Sigmoid colon (tissue), 7 donors: ENCODE measurements at regions of chr19 and their contacts with region 1.

Region 1: GRCh38 chr19:2475702-2476450 is at the start of gene GADD45B:
- DNase-seq: peak; percentile 99
- H3K4me3 ChIP-seq: peak within 1 kb of the TSS; percentile 71 to 97 (median 94)
- H3K27ac ChIP-seq: peak within 1 kb of the TSS; percentile 91 to 96 (median 94)
- H3K4me1 ChIP-seq: peaks cover 0 to 35% (median 20%) of the 10 kb centered on the region in 4 donors
- H3K27me3 ChIP-seq: no peaks in the 10 kb centered on the region
- CTCF ChIP-seq: no peak
- EP300 ChIP-seq: peak in 2 of 4 donors; percentile 42 to 73
- POLR2A ChIP-seq: peak; percentile 100
- total RNA-seq, gene GADD45B: 82.0 to 708 (median 108) TPM

Region 2: DNA sequence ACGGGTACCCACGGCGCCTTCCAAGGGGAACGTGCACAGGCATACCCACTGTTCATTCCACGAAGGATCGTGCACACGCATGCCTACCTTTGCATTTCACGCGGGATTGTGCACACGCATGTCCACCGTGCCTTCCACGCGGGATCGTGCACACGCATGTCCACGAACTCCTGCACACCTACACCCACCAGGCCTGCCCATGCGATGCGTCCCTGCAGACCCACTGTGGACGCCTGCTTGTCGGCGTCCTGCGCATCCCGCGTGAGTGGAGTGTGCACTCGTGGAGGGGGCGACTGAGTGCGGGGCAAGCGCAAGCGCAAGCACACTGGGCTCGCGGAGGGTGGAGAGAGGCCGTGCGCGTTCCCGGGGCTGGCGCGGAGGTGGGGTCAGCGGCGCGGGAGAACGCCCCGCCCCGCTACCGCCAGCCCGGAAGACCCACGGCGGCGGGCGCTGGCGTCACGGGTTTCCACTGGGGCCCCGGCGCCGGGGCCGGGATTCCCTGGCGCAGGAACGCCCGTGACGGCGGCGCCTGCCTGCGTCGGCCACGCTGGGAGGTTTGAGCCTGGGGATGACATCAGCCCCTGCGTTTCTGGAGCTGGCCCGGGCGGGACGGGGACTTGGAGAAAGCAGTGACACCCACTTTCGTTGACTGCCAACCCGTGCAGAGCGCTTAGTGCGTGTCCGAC is 18.7 kb after region 1 on chr19:
- intact Hi-C with region 1: loop called (anchors 2 kb)
- DNase-seq: peak; percentile 94
- H3K4me3 ChIP-seq: peak overlapping the region; percentile 34 to 62 (median 52)
- H3K27ac ChIP-seq: peak overlapping the region; percentile 77 to 94 (median 84)
- H3K4me1 ChIP-seq: peaks cover 0 to 38% (median 27%) of the 10 kb centered on the region in 4 donors
- H3K27me3 ChIP-seq: no peaks in the 10 kb centered on the region
- CTCF ChIP-seq: no peak
- EP300 ChIP-seq: peak in 2 of 4 donors; percentile 38 to 59
- POLR2A ChIP-seq: no peak

Region 3: GRCh38 chr19:2543463-2544442 is 67.9 kb after region 1 on chr19:
- intact Hi-C with region 1: loop called (anchors 1 kb)
- DNase-seq: peak; percentile 99
- H3K4me3 ChIP-seq: peak overlapping the region; percentile 10 to 36 (median 28)
- H3K27ac ChIP-seq: peak overlapping the region; percentile 89 to 98 (median 94)
- H3K4me1 ChIP-seq: peaks cover 0 to 73% (median 69%) of the 10 kb centered on the region in 4 donors
- H3K27me3 ChIP-seq: no peaks in the 10 kb centered on the region
- CTCF ChIP-seq: no peak
- EP300 ChIP-seq: peak; percentile 89 to 98 (median 93)
- POLR2A ChIP-seq: peak; percentile 43 to 46

Region 4: GRCh38 chr19:2602391-2603181 is 126.7 kb after region 1 on chr19:
- intact Hi-C with region 1: loop called (anchors 2 kb)
- DNase-seq: peak; percentile 98
- H3K4me3 ChIP-seq: peak overlapping the region; percentile 8 to 42 (median 32)
- H3K27ac ChIP-seq: peak overlapping the region; percentile 85 to 94 (median 93)
- H3K4me1 ChIP-seq: peaks cover 0 to 55% (median 47%) of the 10 kb centered on the region in 4 donors
- H3K27me3 ChIP-seq: no peaks in the 10 kb centered on the region
- CTCF ChIP-seq: peak in 1 of 4 experiments; percentile 18
- EP300 ChIP-seq: peak; percentile 76 to 99 (median 88)
- POLR2A ChIP-seq: peak in 1 of 2 donors; percentile 59

Region 5: GRCh38 chr19:2610637-2611482 is 135.0 kb after region 1 on chr19:
- intact Hi-C with region 1: loop called (anchors 1 kb)
- DNase-seq: peak; percentile 96
- H3K4me3 ChIP-seq: peak overlapping the region; percentile 15 to 50 (median 46)
- H3K27ac ChIP-seq: peak overlapping the region; percentile 87 to 94 (median 88)
- H3K4me1 ChIP-seq: peaks cover 0 to 28% (median 12%) of the 10 kb centered on the region in 4 donors
- H3K27me3 ChIP-seq: no peaks in the 10 kb centered on the region
- CTCF ChIP-seq: peak; percentile 93 to 98 (median 96)
- EP300 ChIP-seq: peak in 2 of 4 donors; percentile 54 to 74
- POLR2A ChIP-seq: no peak